Activated T-helper 1 cell treated with anti-CD3 and anti-CD28 coated beads, Interleukin-12 subunit alpha, Interleukin-12 subunit beta, Interleukin-2, Interleukin-4 antibody, amounts not matched to agents 30 ng/mL and 10 ng/mL and 1 ng/mL, durations not matched to agents 14 hours and 24 hours and 36 hours (primary cell): ENCODE measurements at regions of chr21 and their contacts with region 1.

Region 1: GRCh38 chr21:30502041-30502440 is at the start of gene KRTAP19-5:
- DNase-seq: no peak
- H3K4me3 Mint-ChIP-seq: no peak within 1 kb of the TSS
- H3K27ac Mint-ChIP-seq: no peak within 1 kb of the TSS
- H3K4me1 Mint-ChIP-seq: no peaks in the 10 kb centered on the region
- H3K27me3 Mint-ChIP-seq: no peaks in the 10 kb centered on the region
- total RNA-seq, gene KRTAP19-5: not detected in 2 replicates

Region 2: DNA sequence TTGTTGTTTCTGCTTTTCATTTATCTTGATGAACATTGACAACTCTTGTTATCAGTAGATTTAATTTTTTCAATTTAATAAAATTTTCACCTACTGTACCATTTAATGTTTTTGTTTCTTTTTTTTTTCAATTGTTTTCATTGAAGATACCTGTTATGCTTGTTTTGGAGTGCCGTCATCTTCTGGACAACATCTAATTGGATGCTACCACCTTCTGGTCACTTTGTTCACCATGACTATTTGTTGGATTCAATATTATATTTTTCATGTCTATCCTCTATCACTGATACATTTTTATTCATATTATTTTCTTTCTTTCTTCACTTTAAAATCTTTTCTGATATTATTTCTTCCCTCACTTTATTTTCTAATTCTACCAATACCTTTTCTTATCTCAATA is 231.0 kb after region 1 on chr21:
- intact Hi-C with region 1: loop called (anchors 1 kb)
- DNase-seq: no peak
- H3K4me3 Mint-ChIP-seq: no peak overlapping the region
- H3K27ac Mint-ChIP-seq: no peak overlapping the region
- H3K4me1 Mint-ChIP-seq: no peaks in the 10 kb centered on the region
- H3K27me3 Mint-ChIP-seq: peaks cover 16% of the 10 kb centered on the region

Region 3: DNA sequence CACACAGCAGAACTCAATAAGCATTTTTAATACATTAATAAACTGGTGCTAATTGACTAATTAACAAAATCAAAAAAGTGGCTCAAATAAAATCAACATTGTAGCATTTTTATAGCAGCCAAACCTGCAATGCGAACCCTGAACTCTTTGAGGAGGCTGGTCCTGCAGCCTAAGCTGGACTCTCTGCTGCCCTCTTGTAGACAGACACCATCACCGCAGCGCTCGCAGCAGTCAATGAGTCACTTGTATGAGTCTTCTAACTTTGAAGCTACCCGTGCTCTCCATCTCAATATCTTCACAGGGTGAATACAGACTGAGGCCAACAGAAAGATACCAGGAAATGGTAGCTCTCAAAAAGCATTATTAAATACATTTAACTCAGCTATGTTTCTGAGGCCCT is 337.3 kb after region 1 on chr21:
- intact Hi-C with region 1: loop called (anchors 2 kb)
- DNase-seq: no peak
- H3K4me3 Mint-ChIP-seq: no peak overlapping the region
- H3K27ac Mint-ChIP-seq: no peak overlapping the region
- H3K4me1 Mint-ChIP-seq: no peaks in the 10 kb centered on the region
- H3K27me3 Mint-ChIP-seq: peaks cover 3% of the 10 kb centered on the region